PC-3 (cell line): ENCODE measurements at regions of chr2 and their contacts with region 1.

Region 1: GRCh38 chr2:190679813-190680591 is 31.1 kb downstream of the NAB1 start:
- DNase-seq: peak; percentile 41
- ATAC-seq: peak; percentile 45; the same call in 1 of the 2 replicates
- H3K4me3 ChIP-seq: no peak overlapping the region
- H3K27ac ChIP-seq: no peak overlapping the region
- H3K4me1 ChIP-seq: peaks cover 8% of the 10 kb centered on the region
- H3K27me3 ChIP-seq: no peaks in the 10 kb centered on the region
- CTCF ChIP-seq: peak; percentile 68

Region 2: GRCh38 chr2:191521608-191522208 is 841.7 kb after region 1 on chr2:
- CTCF ChIA-PET with region 1: no interaction called
- POLR2A ChIA-PET with region 1: interaction called, 17 read pairs
- intact Hi-C with region 1: no loop called
- DNase-seq: peak; percentile 65
- ATAC-seq: no peak
- H3K4me3 ChIP-seq: no peak overlapping the region
- H3K27ac ChIP-seq: no peak overlapping the region
- H3K4me1 ChIP-seq: no peaks in the 10 kb centered on the region
- H3K27me3 ChIP-seq: no peaks in the 10 kb centered on the region
- CTCF ChIP-seq: peak; percentile 84